Activated T-helper 2 cell treated with anti-CD3 and anti-CD28 coated beads, Interferon-gamma antibody, Interleukin-2, Interleukin-4, amounts not matched to agents 10 μg/mL and 5 μg/mL and 100 μg/mL, durations not matched to agents 14 hours and 24 hours and 36 hours (primary cell): ENCODE measurements at regions of chr10 and their contacts with region 1.

Region 1: DNA sequence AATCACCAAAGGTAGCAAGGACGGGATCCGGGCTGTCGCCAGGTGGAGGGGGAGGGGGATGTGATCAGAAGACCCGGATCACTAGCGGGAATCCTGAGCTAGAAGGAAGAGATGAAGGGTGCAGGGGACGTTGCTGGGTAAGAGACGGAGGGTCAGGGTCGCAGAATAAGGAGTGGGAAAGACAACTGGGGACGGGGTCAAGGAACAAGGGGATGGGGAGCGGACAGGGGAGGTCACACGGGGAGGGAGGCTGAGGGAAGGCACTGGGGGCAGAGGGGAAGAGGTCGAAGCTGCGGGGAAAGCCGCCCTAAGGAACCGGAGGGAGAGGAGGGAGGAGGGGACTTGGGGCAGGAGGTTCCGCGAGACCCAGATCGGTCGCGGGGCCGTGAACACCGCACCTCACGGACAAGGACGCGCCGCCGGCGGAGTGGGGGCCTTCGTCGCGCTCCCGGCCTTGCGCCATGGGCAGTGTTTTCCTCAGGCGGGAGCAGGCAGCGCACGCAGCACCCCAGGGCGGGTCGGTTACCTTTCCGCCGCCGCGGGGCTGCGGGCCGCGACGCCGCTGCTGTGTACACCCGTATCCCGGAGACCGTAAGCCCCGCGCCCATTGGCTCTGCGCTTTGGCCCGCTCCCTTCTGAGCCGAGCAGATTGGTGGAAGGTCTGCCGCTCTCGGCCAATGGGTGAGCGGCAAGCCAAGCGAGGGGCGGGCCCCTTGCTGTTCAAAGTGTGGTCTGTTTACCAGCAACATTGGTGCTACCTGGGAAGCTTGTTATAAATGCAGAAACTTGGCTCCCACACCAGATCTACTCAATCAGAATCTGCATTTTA is at the start of gene CFAP43:
- DNase-seq: peak; percentile 98
- H3K4me3 Mint-ChIP-seq: peak within 1 kb of the TSS; percentile 85
- H3K27ac Mint-ChIP-seq: peak within 1 kb of the TSS; percentile 58
- H3K4me1 Mint-ChIP-seq: peaks cover 14% of the 10 kb centered on the region
- H3K27me3 Mint-ChIP-seq: peaks cover 40% of the 10 kb centered on the region
- total RNA-seq, gene CFAP43: 0.07 TPM in 1 of 2 replicates, not detected in the other

Region 2: DNA sequence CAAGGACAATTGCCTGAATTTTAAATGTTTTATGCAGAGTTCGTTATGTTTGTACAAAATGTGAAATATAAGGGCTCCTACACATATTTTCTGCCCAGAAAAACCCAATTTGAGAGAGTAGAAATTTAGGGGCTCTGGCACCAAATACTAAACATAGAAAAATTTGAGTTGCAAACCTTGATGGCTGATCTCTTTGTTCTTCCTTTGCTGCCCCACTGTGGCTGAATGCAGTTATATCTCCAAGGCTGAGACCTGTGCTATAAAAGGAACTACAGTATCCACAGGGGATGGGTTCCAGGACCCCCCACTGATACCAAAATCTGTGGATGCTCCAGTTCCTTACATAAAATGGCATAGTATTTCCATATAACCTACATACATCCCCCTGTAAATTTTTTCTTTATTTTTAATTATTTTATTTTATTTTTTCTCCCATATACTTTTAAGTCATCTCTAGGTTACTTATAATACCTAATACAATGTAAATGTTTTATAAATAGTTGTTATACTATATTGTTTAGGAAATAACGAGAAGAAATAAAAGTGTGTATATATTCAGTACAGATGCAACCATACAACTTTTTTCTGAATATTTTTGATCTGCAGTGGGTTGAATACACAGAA is 22.3 kb before region 1 on chr10:
- intact Hi-C with region 1: no loop called
- DNase-seq: no peak
- H3K4me3 Mint-ChIP-seq: no peak overlapping the region
- H3K27ac Mint-ChIP-seq: no peak overlapping the region
- H3K4me1 Mint-ChIP-seq: no peaks in the 10 kb centered on the region
- H3K27me3 Mint-ChIP-seq: peaks cover 42% of the 10 kb centered on the region

Region 3: DNA sequence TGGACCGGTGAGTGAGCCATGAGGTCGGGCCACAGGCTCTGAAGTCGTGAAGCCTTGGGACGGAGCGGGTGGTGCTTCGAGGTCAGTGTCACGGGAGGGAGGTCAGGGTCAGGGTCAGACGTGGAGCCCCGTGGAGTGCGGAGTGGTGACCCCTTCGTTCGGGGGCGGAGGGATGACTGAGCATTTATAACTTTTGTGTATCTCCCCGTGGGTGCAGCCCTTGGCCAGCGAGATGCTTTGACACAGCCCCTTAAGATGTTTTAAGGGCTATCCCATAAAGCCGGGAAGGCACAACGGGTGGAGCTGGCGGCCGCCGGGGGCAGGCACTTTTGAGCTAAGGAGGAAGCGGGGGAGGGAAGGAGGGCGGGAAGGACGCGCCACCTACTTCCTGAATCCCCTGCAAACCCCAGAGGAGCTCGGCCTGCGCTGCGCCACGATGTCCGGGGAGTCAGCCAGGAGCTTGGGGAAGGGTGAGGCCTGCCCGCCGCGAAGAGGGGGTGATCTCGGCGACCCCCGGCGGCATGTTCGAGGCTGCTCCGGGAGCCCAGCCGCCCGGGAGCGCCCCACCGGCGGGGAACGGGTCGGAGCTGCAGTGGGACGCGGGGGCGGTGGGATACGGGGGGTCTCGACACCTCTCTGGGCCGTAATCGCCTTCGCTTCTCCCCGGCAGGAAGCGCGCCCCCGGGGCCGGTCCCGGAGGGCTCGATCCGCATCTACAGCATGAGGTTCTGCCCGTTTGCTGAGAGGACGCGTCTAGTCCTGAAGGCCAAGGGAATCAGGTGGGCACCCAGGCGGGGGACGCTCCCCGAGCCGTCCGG is 22.7 kb after region 1 on chr10 and contains the start of gene GSTO1:
- intact Hi-C with region 1: loop called (anchors 1 kb)
- DNase-seq: peak; percentile 26
- H3K4me3 Mint-ChIP-seq: peak within 1 kb of the TSS; percentile 99
- H3K27ac Mint-ChIP-seq: peak within 1 kb of the TSS; percentile 97
- H3K4me1 Mint-ChIP-seq: peaks cover 49% of the 10 kb centered on the region
- H3K27me3 Mint-ChIP-seq: peaks cover 7% of the 10 kb centered on the region
- total RNA-seq, gene GSTO1: 168 and 174 TPM in 2 replicates

Region 4: DNA sequence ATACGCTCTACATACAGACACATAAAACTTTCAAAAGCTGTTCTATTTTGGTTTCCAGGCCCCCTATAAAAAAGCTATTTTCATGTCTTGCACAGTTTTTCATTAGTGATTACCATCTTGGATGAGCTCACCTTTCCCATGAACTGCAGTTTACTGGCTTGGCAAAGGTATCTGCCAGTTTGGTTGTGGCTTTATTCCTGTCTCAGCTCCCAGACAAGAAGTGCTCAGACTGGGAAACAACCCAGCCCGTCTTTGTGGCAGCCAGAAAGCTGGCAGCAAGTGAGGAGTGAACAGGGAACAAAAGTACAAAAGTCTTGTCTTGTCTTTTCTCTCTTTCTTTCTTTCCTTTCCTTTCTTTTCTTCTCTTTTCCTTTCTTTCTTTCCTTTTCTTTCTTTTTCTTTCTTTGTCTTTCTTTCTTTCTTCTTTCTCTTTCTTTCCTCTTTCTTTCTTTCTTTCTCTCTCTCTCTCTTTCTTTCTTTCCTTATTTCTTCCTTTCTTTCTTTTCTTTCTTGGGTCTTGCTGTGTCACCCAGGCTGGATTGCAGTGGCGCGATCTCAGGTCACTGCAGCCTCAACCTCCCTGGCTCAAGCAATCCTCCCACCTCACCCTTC is 260.4 kb after region 1 on chr10:
- intact Hi-C with region 1: no loop called
- DNase-seq: no peak
- H3K4me3 Mint-ChIP-seq: no peak overlapping the region
- H3K27ac Mint-ChIP-seq: no peak overlapping the region
- H3K4me1 Mint-ChIP-seq: no peaks in the 10 kb centered on the region
- H3K27me3 Mint-ChIP-seq: peaks cover 3% of the 10 kb centered on the region